B cell (primary cell): ENCODE measurements at regions of chr1 and their contacts with region 1.

Region 1: GRCh38 chr1:1144122-1144842 is 28.4 kb upstream of the C1orf159 start:
- DNase-seq: peak; percentile 92
- ATAC-seq: peak; percentile 95
- H3K4me3 ChIP-seq: peak overlapping the region in 4 of 5 experiments; percentile 29 to 45 (median 34)
- H3K4me3 Mint-ChIP-seq: peak overlapping the region; percentile 78
- H3K27ac ChIP-seq: peak overlapping the region; percentile 98
- H3K27ac Mint-ChIP-seq: peak overlapping the region; percentile 96
- H3K4me1 ChIP-seq: peaks cover 33 to 47% of the 10 kb centered on the region in 2 donors
- H3K4me1 Mint-ChIP-seq: peaks cover 29% of the 10 kb centered on the region
- H3K27me3 ChIP-seq: no peaks in the 10 kb centered on the region
- H3K27me3 Mint-ChIP-seq: no peaks in the 10 kb centered on the region
- CTCF ChIP-seq: no peak

Region 2: DNA sequence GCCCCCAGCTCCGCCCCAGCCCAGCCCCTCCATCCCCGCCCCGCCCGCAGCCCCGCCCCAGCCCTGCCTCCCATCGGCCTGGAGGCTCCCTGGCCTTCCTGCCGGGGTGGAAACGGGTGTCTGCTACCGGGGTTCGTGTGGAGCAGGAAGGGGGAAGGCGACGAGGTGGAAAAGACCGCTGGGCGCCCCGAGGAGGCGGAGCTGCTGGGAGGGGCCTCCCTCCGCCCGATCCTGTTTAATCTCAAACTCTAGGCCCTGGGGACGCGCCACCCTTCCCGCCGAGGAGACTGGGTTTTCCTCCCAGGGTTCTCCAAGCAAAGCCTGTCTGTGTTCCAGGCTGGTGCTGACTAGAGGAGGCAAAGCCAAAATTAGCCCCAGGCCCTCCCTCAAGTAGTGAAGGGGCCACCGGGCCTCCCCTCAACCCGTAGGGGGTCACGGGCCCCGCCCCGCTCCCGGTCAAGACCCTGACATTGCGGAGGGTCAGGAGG is 13.2 kb after region 1 on chr1:
- CTCF ChIA-PET with region 1: no interaction called
- POLR2A ChIA-PET with region 1: interaction called, 6 read pairs
- intact Hi-C with region 1: loop called (anchors 1 kb)
- DNase-seq: peak; percentile 74
- ATAC-seq: peak; percentile 64
- H3K4me3 ChIP-seq: peak overlapping the region; percentile 52 to 93 (median 87)
- H3K4me3 Mint-ChIP-seq: peak overlapping the region; percentile 86
- H3K27ac ChIP-seq: peak overlapping the region; percentile 94 to 97
- H3K27ac Mint-ChIP-seq: peak overlapping the region; percentile 89
- H3K4me1 ChIP-seq: peaks cover 8 to 23% of the 10 kb centered on the region in 2 donors
- H3K4me1 Mint-ChIP-seq: peaks cover 5% of the 10 kb centered on the region
- H3K27me3 ChIP-seq: no peaks in the 10 kb centered on the region
- H3K27me3 Mint-ChIP-seq: no peaks in the 10 kb centered on the region
- CTCF ChIP-seq: no peak

Region 3: DNA sequence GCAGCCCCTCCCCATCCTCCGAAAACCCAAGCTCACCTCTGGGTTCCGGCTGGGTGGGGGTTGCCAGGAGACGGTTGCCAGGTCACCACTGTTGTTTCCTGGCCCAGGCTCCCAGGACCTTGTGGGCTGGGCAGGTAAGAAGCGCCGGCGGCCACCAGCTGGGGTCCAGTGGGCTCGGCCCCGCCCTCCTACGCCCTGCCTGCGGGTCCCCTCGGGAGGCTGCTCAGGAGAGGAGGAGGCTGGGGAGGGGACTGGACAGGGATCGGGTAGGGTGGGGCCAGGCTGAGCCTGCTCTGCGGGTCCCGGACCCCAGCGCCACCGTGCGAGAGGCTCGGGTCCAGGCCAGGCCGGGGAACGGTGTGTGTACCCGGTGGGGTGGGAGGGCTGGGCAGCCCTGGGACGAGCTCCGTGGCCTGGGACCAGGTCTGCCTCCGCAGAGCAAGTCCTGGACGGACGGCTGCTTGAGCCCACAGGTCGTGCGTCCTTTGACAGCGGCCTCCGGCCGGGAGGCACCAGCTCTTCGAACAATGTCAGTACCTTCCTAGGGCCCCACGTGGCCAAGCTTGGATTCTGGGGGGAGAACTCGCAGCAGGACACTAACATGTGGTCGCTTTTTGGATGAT is 29.6 kb after region 1 on chr1 and contains the start of gene TTLL10:
- CTCF ChIA-PET with region 1: no interaction called
- POLR2A ChIA-PET with region 1: interaction called, 3 read pairs
- intact Hi-C with region 1: loop called (anchors 2 kb)
- DNase-seq: peak; percentile 84
- ATAC-seq: peak; percentile 31
- H3K4me3 ChIP-seq: peak within 1 kb of the TSS in 2 of 5 experiments; percentile 15 to 22
- H3K4me3 Mint-ChIP-seq: peak within 1 kb of the TSS; percentile 55
- H3K27ac ChIP-seq: no peak within 1 kb of the TSS
- H3K27ac Mint-ChIP-seq: peak within 1 kb of the TSS; percentile 50
- H3K4me1 ChIP-seq: peaks cover 57 to 70% of the 10 kb centered on the region in 2 donors
- H3K4me1 Mint-ChIP-seq: peaks cover 52% of the 10 kb centered on the region
- H3K27me3 ChIP-seq: peaks cover 0 to 44% (median 21%) of the 10 kb centered on the region in 4 experiments
- H3K27me3 Mint-ChIP-seq: peaks cover 12% of the 10 kb centered on the region
- CTCF ChIP-seq: no peak
- total RNA-seq, gene TTLL10: 0.37 and 0.61 TPM in 2 replicates

Region 4: GRCh38 chr1:1200851-1201810 is 56.8 kb after region 1 on chr1:
- CTCF ChIA-PET with region 1: no interaction called
- POLR2A ChIA-PET with region 1: no interaction called
- intact Hi-C with region 1: loop called (anchors 1 kb)
- DNase-seq: peak; percentile 94
- ATAC-seq: peak; percentile 84
- H3K4me3 ChIP-seq: peak overlapping the region in 4 of 5 experiments; percentile 28 to 58 (median 52)
- H3K4me3 Mint-ChIP-seq: peak overlapping the region; percentile 60
- H3K27ac ChIP-seq: no peak overlapping the region
- H3K27ac Mint-ChIP-seq: peak overlapping the region; percentile 32
- H3K4me1 ChIP-seq: peaks cover 17 to 18% of the 10 kb centered on the region in 2 donors
- H3K4me1 Mint-ChIP-seq: peaks cover 12% of the 10 kb centered on the region
- H3K27me3 ChIP-seq: peaks cover 0 to 19% (median 8%) of the 10 kb centered on the region in 4 experiments
- H3K27me3 Mint-ChIP-seq: no peaks in the 10 kb centered on the region
- CTCF ChIP-seq: no peak